Activated T-helper 2 cell treated with anti-CD3 and anti-CD28 coated beads, Interferon-gamma antibody, Interleukin-2, Interleukin-4, amounts not matched to agents 10 μg/mL and 5 μg/mL and 100 μg/mL, durations not matched to agents 14 hours and 24 hours and 36 hours (primary cell): ENCODE measurements at regions of chr12 and their contacts with region 1.

Region 1: DNA sequence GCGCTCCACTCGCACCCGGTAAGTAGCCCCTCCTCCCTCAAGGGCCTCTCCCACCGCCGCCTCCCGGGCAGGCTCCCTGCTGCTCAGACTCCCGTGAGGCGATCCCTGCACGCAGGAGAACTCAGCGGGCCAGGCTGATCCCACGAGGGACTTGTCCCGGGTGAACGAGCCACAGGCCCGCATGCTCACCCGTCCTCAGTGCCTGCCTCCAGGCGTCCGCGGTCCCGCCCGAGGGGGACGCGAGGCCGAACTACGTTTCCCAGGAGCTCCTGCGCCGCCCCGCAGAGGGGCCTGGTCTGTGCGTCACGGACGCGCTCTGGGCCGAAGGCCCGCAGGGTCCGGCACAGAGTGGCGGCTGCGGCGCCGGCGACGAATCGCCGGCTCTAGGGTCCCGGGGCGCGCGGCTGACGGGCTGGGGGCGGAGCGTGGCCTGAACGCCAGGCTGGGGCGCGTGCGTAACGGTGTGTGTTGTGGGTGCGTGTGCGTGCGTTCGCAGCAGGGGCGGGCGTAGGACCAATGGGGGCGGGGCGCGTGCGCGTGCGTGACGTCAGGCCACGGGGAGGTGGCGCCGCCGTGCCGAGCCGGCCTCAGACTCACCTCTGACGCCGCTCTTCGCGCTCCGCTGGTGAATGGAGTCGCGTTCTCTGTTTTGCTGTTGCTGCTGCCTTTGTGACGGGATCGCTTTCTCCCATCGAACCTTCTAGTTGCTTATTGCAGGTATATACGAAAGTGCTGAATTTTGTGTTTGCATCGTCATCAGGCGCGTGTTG is at the starts of genes ZNF10 and ZNF891:
- DNase-seq: peak; percentile 94
- H3K4me3 Mint-ChIP-seq: peak within 1 kb of the TSS; percentile 92
- H3K27ac Mint-ChIP-seq: peak within 1 kb of the TSS; percentile 99
- H3K4me1 Mint-ChIP-seq: peaks cover 11% of the 10 kb centered on the region
- H3K27me3 Mint-ChIP-seq: no peaks in the 10 kb centered on the region
- total RNA-seq, gene ZNF10: 4.9 and 6.3 TPM in 2 replicates
- total RNA-seq, gene ZNF891: 2.0 and 2.3 TPM in 2 replicates

Region 2: GRCh38 chr12:133181238-133181959 is 51.2 kb after region 1 on chr12 and contains the start of gene ZNF268:
- intact Hi-C with region 1: loop called (anchors 1 kb)
- DNase-seq: peak; percentile 88
- H3K4me3 Mint-ChIP-seq: peak within 1 kb of the TSS; percentile 99
- H3K27ac Mint-ChIP-seq: peak within 1 kb of the TSS; percentile 95
- H3K4me1 Mint-ChIP-seq: peaks cover 1% of the 10 kb centered on the region
- H3K27me3 Mint-ChIP-seq: no peaks in the 10 kb centered on the region
- total RNA-seq, gene ZNF268: 12.7 and 17.2 TPM in 2 replicates

Region 3: GRCh38 chr12:133235401-133236112 is 105.3 kb after region 1 on chr12 and contains the start of gene ANHX:
- intact Hi-C with region 1: no loop called
- DNase-seq: no peak
- H3K4me3 Mint-ChIP-seq: no peak within 1 kb of the TSS
- H3K27ac Mint-ChIP-seq: no peak within 1 kb of the TSS
- H3K4me1 Mint-ChIP-seq: no peaks in the 10 kb centered on the region
- H3K27me3 Mint-ChIP-seq: no peaks in the 10 kb centered on the region
- total RNA-seq, gene ANHX: not detected in 2 replicates